ENCODE measurements at regions of chr1 and their contacts with region 1.

Region 1: DNA sequence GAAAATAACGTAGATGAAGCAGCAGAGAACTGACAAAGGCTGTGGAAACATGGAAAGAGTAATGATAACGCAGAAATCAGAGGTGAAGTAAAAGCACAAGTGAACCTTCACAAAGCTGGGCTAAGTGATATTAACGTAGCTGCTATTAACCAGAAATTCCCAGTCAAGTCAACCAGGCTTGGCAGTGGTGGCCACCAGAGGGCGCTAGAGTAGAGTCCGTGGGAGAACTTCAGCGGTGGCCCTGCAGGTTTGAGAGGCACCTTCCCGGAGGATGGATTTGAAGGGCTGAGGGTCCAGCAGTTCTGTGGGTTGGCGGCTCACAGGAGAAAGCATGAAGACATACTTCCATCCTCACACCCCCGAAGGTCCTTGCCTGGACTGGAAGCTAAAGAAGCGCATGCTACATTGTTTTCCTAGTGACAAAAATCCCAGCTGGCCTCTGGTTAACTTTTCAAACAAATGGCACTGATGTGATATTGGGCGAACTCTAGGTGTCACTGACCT is 81.7 kb upstream of the ZNF648 start:
- DNase-seq: peak; percentile 93 to 98
- H3K4me3 ChIP-seq: no peak overlapping the region
- H3K27ac ChIP-seq: peak overlapping the region; percentile 94 to 100 (median 95)
- H3K4me1 ChIP-seq: peaks cover 26 to 54% of the 10 kb centered on the region in 2 donors
- H3K27me3 ChIP-seq: no peaks in the 10 kb centered on the region
- CTCF ChIP-seq: peak; percentile 90 to 98 (median 95)
- POLR2A ChIP-seq: no peak

Region 2: GRCh38 chr1:182198049-182198501 is 54.9 kb after region 1 on chr1:
- intact Hi-C with region 1: no loop called
- DNase-seq: no peak
- H3K4me3 ChIP-seq: no peak overlapping the region
- H3K27ac ChIP-seq: peak overlapping the region; percentile 80 to 96 (median 88)
- H3K4me1 ChIP-seq: peaks cover 61 to 66% of the 10 kb centered on the region in 2 donors
- H3K27me3 ChIP-seq: no peaks in the 10 kb centered on the region
- CTCF ChIP-seq: peak in 2 of 6 experiments; percentile 23 to 31
- POLR2A ChIP-seq: no peak

Region 3: DNA sequence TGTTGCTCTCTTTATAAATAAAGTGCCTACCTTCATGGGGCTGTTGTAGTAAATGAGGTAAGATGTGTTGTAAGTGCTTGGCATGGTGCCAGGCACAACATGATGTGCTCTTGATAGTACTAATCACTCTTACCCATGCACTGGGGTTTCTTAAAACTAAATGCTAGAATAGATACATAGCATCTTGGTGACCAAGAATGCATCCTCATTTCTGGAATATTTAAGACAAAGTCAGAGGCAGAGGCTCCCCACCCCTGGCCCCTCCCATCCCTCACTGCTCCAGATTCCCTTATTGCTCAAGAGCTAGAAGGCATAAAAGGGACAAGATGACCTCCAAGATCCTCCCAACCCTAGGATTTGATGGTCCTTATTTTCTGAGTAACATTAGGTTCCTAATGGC is 187.1 kb after region 1 on chr1:
- intact Hi-C with region 1: no loop called
- DNase-seq: peak; percentile 61 to 66
- H3K4me3 ChIP-seq: no peak overlapping the region
- H3K27ac ChIP-seq: no peak overlapping the region
- H3K4me1 ChIP-seq: no peaks in the 10 kb centered on the region
- H3K27me3 ChIP-seq: no peaks in the 10 kb centered on the region
- CTCF ChIP-seq: no peak
- POLR2A ChIP-seq: no peak

Region 4: GRCh38 chr1:182397771-182398393 is 254.7 kb after region 1 on chr1:
- intact Hi-C with region 1: loop called (anchors 5 kb)
- DNase-seq: peak; percentile 31 to 43
- H3K4me3 ChIP-seq: no peak overlapping the region
- H3K27ac ChIP-seq: peak overlapping the region; percentile 74 to 85 (median 76)
- H3K4me1 ChIP-seq: peaks cover 18 to 21% of the 10 kb centered on the region in 2 donors
- H3K27me3 ChIP-seq: no peaks in the 10 kb centered on the region
- CTCF ChIP-seq: no peak
- POLR2A ChIP-seq: peak in 1 of 2 donors; percentile 19